Activated naive CD4-positive, alpha-beta T cell treated with anti-CD3 and anti-CD28 coated beads for 36 hours (primary cell): ENCODE measurements at regions of chr14 and their contacts with region 1.

Region 1: DNA sequence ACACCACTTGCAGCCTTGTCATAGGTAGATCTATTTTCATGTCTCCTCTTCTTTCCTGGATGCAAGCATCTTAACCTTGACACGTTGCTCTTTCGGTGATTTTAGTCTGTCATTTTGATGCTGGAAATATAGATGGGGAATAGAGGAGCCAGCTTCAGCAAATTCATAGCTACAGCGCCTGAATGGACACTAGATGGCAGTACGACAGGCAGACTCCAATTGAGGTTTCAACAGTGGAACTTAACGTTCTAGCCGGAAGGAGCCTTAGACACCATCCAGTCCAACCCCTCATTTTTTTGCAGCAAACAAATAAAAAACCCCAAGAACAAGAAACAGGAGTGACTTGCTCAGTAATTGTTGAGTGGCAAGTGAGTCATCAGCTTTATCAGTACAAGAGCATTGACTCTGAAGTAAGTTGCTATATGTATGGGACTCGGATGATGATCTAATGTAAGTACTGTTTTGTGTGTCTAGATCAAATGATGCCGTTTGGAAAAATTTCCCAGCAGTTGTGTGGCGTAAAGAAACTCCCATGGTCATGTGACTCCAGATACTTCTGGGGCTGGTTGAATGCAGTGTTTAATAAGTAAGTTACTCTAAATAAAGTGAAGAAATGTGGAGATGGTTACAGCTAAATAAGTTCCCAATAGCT is 9.0 kb downstream of the DMAC2L start:
- DNase-seq: peak; percentile 80
- H3K4me3 Mint-ChIP-seq: no peak overlapping the region
- H3K27ac Mint-ChIP-seq: no peak overlapping the region
- H3K4me1 Mint-ChIP-seq: peaks cover 25% of the 10 kb centered on the region
- H3K27me3 Mint-ChIP-seq: no peaks in the 10 kb centered on the region

Region 2: GRCh38 chr14:49160983-49161382 is 1160.2 kb before region 1 on chr14:
- CTCF ChIA-PET with region 1: no interaction called
- intact Hi-C with region 1: no loop called
- DNase-seq: no peak
- H3K4me3 Mint-ChIP-seq: no peak overlapping the region
- H3K27ac Mint-ChIP-seq: no peak overlapping the region
- H3K4me1 Mint-ChIP-seq: no peaks in the 10 kb centered on the region
- H3K27me3 Mint-ChIP-seq: no peaks in the 10 kb centered on the region

Region 3: GRCh38 chr14:50263321-50263720 is 57.8 kb before region 1 on chr14:
- CTCF ChIA-PET with region 1: no interaction called
- intact Hi-C with region 1: no loop called
- DNase-seq: no peak
- H3K4me3 Mint-ChIP-seq: no peak overlapping the region
- H3K27ac Mint-ChIP-seq: no peak overlapping the region
- H3K4me1 Mint-ChIP-seq: no peaks in the 10 kb centered on the region
- H3K27me3 Mint-ChIP-seq: no peaks in the 10 kb centered on the region

Region 4: GRCh38 chr14:50335389-50335788 is 14.3 kb after region 1 on chr14:
- CTCF ChIA-PET with region 1: interaction called, 14 read pairs
- intact Hi-C with region 1: no loop called
- DNase-seq: no peak
- H3K4me3 Mint-ChIP-seq: no peak overlapping the region
- H3K27ac Mint-ChIP-seq: no peak overlapping the region
- H3K4me1 Mint-ChIP-seq: peaks cover 13% of the 10 kb centered on the region
- H3K27me3 Mint-ChIP-seq: no peaks in the 10 kb centered on the region

Region 5: DNA sequence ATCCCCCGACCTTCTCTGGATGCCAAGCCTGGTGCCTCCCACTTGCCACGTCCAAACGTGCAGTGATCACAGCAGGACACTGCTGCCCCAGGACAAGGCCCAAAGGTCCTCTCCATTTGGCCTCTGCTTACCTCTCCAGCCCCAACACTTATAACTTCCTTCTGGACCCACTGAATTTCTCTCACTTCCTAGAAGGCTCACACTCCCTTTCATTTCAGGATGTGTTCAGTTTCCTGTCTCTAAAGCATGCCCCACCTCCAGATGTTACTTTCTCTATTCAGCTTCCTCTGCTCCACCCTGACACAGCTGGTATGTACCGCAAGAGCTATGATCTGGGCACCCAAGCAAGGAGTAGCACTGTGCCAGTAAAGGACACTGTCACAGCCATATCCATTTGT is 42.6 kb after region 1 on chr14:
- CTCF ChIA-PET with region 1: interaction called, 7 read pairs
- intact Hi-C with region 1: loop called (anchors 1 kb)
- DNase-seq: peak; percentile 74
- H3K4me3 Mint-ChIP-seq: peak overlapping the region; percentile 73
- H3K27ac Mint-ChIP-seq: peak overlapping the region; percentile 84
- H3K4me1 Mint-ChIP-seq: peaks cover 18% of the 10 kb centered on the region
- H3K27me3 Mint-ChIP-seq: no peaks in the 10 kb centered on the region

Region 6: GRCh38 chr14:50532502-50533240 is 211.5 kb after region 1 on chr14 and contains the start of gene MAP4K5:
- CTCF ChIA-PET with region 1: interaction called, 26 read pairs
- intact Hi-C with region 1: loop called (anchors 1 kb)
- DNase-seq: peak; percentile 89
- H3K4me3 Mint-ChIP-seq: peak within 1 kb of the TSS; percentile 85
- H3K27ac Mint-ChIP-seq: peak within 1 kb of the TSS; percentile 72
- H3K4me1 Mint-ChIP-seq: peaks cover 45% of the 10 kb centered on the region
- H3K27me3 Mint-ChIP-seq: no peaks in the 10 kb centered on the region
- total RNA-seq, gene MAP4K5: 10.2 to 11.2 TPM

Region 7: DNA sequence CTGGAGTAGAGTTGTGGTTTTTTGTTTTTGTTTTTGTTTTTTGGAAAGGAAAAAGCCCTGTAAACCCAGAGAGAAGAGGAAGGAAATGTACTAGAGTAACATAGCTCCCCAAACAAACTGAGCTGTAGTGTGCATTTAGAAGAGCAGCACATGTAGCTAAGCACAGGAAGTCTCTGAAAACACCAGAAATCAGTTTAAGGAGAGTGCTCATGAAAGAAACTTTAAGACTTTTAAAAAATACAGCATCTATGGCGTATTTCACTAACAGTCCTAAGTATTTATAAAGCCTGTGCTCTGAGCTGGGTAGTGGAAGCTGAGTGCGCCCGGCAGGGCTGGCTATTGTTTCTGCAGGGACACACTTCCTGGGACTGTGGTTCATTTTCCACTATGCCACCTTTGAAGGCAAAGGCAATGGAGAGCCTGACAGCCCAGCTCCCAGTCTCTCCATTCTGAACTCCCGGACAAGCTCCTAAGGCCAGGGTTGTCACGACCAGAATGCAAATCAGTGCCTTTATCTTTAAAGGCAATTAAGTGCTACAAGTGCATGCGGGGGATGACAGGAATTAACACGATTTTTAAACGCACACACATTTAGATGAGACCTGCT is 464.4 kb after region 1 on chr14:
- CTCF ChIA-PET with region 1: no interaction called
- intact Hi-C with region 1: loop called (anchors 1 kb)
- DNase-seq: no peak
- H3K4me3 Mint-ChIP-seq: no peak overlapping the region
- H3K27ac Mint-ChIP-seq: no peak overlapping the region
- H3K4me1 Mint-ChIP-seq: peaks cover 66% of the 10 kb centered on the region
- H3K27me3 Mint-ChIP-seq: no peaks in the 10 kb centered on the region